ENCODE measurements at regions of chr3 and their contacts with region 1.

Region 1: GRCh38 chr3:12323237-12323636 is 34.4 kb downstream of the PPARG start:
- DNase-seq: peak; percentile 36 to 75 (median 65)
- H3K4me3 ChIP-seq: peak overlapping the region in 1 of 3 experiments; percentile 9
- H3K4me3 Mint-ChIP-seq: peak overlapping the region in 1 of 2 donors; percentile 9
- H3K27ac ChIP-seq: no peak overlapping the region
- H3K27ac Mint-ChIP-seq: peak overlapping the region; percentile 2 to 96 (median 81)
- H3K4me1 ChIP-seq: peaks cover 51 to 56% of the 10 kb centered on the region in 2 donors
- H3K4me1 Mint-ChIP-seq: peaks cover 54% of the 10 kb centered on the region
- H3K27me3 ChIP-seq: no peaks in the 10 kb centered on the region
- H3K27me3 Mint-ChIP-seq: peaks cover 0 to 10% (median 0%) of the 10 kb centered on the region in 3 donors
- CTCF ChIP-seq: no peak

Region 2: GRCh38 chr3:12097971-12098370 is 225.3 kb before region 1 on chr3:
- intact Hi-C with region 1: no loop called
- DNase-seq: no peak
- H3K4me3 ChIP-seq: no peak overlapping the region
- H3K4me3 Mint-ChIP-seq: no peak overlapping the region
- H3K27ac ChIP-seq: no peak overlapping the region
- H3K27ac Mint-ChIP-seq: no peak overlapping the region
- H3K4me1 ChIP-seq: no peaks in the 10 kb centered on the region
- H3K4me1 Mint-ChIP-seq: no peaks in the 10 kb centered on the region
- H3K27me3 ChIP-seq: no peaks in the 10 kb centered on the region
- H3K27me3 Mint-ChIP-seq: peaks cover 2 to 5% (median 4%) of the 10 kb centered on the region in 3 donors
- CTCF ChIP-seq: no peak

Region 3: DNA sequence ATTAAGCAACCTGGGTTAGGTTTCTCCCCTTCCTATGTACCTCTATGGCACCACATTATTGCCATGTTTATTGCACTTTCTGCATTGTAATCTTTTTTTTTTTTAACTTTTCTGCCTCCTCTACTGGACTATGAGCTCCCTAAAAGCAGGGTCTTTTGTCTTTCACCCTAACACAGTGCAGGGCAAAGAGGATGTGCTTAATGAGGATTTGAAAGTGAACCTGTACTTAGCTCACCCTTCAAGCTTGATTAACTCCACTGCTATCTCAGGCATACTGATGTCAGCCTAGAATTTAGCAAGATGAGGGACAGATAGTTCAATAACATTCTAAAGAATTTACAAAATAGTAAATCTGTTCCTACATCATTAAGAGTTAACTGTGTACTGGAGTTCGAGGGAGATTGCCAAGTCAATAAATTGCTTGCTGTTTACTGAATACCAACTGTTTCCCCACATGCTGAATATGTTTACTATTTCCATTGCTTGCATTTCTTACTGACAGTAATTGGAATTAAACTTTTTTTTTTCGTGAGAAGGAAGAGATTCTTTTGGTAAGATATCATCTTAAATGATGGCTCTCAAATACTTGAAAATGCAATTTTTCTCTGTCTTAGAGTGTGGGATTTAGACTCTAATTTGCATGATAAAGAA is 50.1 kb before region 1 on chr3:
- intact Hi-C with region 1: no loop called
- DNase-seq: no peak
- H3K4me3 ChIP-seq: no peak overlapping the region
- H3K4me3 Mint-ChIP-seq: no peak overlapping the region
- H3K27ac ChIP-seq: no peak overlapping the region
- H3K27ac Mint-ChIP-seq: no peak overlapping the region
- H3K4me1 ChIP-seq: peaks cover 35 to 42% of the 10 kb centered on the region in 2 donors
- H3K4me1 Mint-ChIP-seq: peaks cover 41% of the 10 kb centered on the region
- H3K27me3 ChIP-seq: no peaks in the 10 kb centered on the region
- H3K27me3 Mint-ChIP-seq: peaks cover 0 to 1% (median 0%) of the 10 kb centered on the region in 3 donors
- CTCF ChIP-seq: no peak

Region 4: GRCh38 chr3:12363397-12364195 is 40.4 kb after region 1 on chr3:
- intact Hi-C with region 1: loop called in 1 of 2 experiments (anchors 5 kb)
- DNase-seq: peak in 1 of 3 donors; percentile 17
- H3K4me3 ChIP-seq: no peak overlapping the region
- H3K4me3 Mint-ChIP-seq: no peak overlapping the region
- H3K27ac ChIP-seq: no peak overlapping the region
- H3K27ac Mint-ChIP-seq: peak overlapping the region in 2 of 7 donors; percentile 2 to 36
- H3K4me1 ChIP-seq: peaks cover 0 to 4% of the 10 kb centered on the region in 2 donors
- H3K4me1 Mint-ChIP-seq: peaks cover 9% of the 10 kb centered on the region
- H3K27me3 ChIP-seq: no peaks in the 10 kb centered on the region
- H3K27me3 Mint-ChIP-seq: no peaks in the 10 kb centered on the region
- CTCF ChIP-seq: no peak

Region 5: GRCh38 chr3:12601072-12601471 is 277.8 kb after region 1 on chr3:
- intact Hi-C with region 1: no loop called
- DNase-seq: no peak
- H3K4me3 ChIP-seq: no peak overlapping the region
- H3K4me3 Mint-ChIP-seq: no peak overlapping the region
- H3K27ac ChIP-seq: no peak overlapping the region
- H3K27ac Mint-ChIP-seq: no peak overlapping the region
- H3K4me1 ChIP-seq: no peaks in the 10 kb centered on the region
- H3K4me1 Mint-ChIP-seq: no peaks in the 10 kb centered on the region
- H3K27me3 ChIP-seq: no peaks in the 10 kb centered on the region
- H3K27me3 Mint-ChIP-seq: no peaks in the 10 kb centered on the region
- CTCF ChIP-seq: no peak